Transverse colon (tissue), 4 donors: ENCODE measurements at regions of chrX and their contacts with region 1.

Region 1: DNA sequence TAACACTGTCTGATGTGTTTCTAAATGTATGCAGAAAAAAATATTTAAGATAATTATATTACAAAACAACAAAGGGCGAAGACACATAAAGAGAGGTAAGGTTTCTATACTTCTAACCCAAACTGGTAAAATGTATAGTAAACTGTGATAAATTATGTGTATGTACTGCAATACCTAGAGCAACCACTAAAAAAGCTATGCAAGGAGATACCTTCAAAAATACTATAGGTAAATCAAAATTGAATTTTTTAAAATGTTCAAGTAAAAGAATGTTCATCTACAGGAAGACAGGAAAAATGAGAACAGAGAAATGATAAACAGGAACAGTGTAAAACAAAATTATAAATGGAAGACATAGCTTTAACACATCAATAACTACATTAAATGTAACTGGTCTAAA is 27.3 kb upstream of the RAI2 start:
- DNase-seq: no peak
- H3K4me3 ChIP-seq: no peak overlapping the region
- H3K27ac ChIP-seq: no peak overlapping the region
- H3K4me1 ChIP-seq: no peaks in the 10 kb centered on the region
- H3K27me3 ChIP-seq: no peaks in the 10 kb centered on the region
- CTCF ChIP-seq: peak in 1 of 5 experiments; percentile 21
- EP300 ChIP-seq: no peak
- POLR2A ChIP-seq: no peak

Region 2: DNA sequence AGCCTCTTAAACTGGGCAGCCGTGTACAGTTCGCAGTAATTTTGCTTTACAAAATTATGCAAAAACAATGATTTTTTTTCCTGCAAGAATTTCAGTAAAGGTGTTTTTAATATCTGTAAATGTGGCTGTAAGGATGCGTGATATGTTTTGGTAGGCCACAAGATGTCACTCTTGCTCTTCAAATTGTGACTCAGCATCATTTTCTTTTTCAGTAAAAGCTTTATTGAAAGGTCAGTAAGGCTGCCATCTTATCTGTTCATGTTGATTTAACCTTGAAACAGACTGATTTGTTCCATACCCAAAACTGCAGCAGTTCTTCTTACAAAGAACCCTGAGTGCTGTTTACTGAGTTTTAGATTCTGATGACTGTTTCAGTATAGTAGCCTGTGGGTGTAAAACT is 1062.2 kb before region 1 on chrX:
- in situ Hi-C with region 1: no loop called
- intact Hi-C with region 1: no loop called
- DNase-seq: no peak
- H3K4me3 ChIP-seq: no peak overlapping the region
- H3K27ac ChIP-seq: peak overlapping the region in 1 of 4 donors; percentile 72
- H3K4me1 ChIP-seq: no peaks in the 10 kb centered on the region
- H3K27me3 ChIP-seq: no peaks in the 10 kb centered on the region
- CTCF ChIP-seq: peak; percentile 27 to 43 (median 40)
- EP300 ChIP-seq: no peak
- POLR2A ChIP-seq: no peak

Region 3: DNA sequence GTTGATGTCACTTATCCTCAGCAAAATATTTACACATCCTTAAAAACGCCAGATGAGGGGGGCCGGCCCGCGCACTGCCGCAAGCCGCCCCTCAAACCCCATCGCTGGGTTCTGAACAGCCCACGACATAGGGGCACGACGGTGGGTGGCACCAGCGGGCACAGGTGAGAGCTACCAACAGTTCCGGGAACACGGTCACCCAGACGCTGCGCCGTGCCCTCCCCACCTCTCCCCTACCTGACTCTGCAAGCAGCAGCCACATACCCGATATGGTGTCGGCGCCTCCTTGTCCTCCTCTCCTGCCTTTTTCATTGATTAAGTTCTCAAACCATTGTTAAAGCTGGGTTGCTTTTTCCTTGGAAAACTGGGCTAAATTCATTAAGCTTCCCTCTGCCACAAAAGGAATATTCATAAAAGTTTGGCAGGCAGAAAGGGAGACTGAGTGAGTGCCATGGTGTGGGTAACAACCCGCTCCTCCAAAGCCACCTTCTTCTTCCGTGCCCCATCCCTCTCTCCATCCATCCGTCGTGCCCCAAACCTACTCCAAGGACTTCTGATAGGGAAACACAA is 28.7 kb before region 1 on chrX:
- in situ Hi-C with region 1: no loop called
- intact Hi-C with region 1: no loop called
- DNase-seq: peak; percentile 15
- H3K4me3 ChIP-seq: peak overlapping the region; percentile 4 to 65 (median 41)
- H3K27ac ChIP-seq: peak overlapping the region; percentile 34 to 70 (median 65)
- H3K4me1 ChIP-seq: peaks cover 0 to 3% (median 0%) of the 10 kb centered on the region in 4 donors
- H3K27me3 ChIP-seq: peaks cover 20% of the 10 kb centered on the region
- CTCF ChIP-seq: no peak
- EP300 ChIP-seq: no peak
- POLR2A ChIP-seq: no peak

Region 4: DNA sequence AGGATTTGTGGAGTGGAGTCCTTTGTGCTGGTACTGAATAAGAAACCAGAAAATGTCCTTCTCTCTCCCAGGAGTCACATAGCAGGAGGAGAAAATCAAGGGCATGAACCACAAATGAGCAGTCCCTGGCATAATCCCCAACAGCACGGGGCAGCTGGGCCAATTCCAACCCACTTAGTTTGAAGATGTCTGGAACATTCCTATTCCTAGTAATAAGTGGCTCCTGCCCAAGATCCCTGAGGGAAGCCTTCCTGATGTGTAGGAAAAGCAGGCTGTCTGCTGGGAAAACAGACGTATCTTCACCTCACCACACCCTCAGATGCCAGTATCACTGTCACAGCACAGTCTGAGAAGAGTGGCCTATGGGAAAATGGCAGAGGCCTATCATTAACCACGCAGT is 1809.7 kb after region 1 on chrX:
- in situ Hi-C with region 1: no loop called
- intact Hi-C with region 1: loop called (anchors 5 kb)
- DNase-seq: no peak
- H3K4me3 ChIP-seq: no peak overlapping the region
- H3K27ac ChIP-seq: no peak overlapping the region
- H3K4me1 ChIP-seq: no peaks in the 10 kb centered on the region
- H3K27me3 ChIP-seq: no peaks in the 10 kb centered on the region
- CTCF ChIP-seq: no peak
- EP300 ChIP-seq: no peak
- POLR2A ChIP-seq: no peak